HEK293 (cell line): ENCODE measurements at regions of chr7 and their contacts with region 1.

Region 1: DNA sequence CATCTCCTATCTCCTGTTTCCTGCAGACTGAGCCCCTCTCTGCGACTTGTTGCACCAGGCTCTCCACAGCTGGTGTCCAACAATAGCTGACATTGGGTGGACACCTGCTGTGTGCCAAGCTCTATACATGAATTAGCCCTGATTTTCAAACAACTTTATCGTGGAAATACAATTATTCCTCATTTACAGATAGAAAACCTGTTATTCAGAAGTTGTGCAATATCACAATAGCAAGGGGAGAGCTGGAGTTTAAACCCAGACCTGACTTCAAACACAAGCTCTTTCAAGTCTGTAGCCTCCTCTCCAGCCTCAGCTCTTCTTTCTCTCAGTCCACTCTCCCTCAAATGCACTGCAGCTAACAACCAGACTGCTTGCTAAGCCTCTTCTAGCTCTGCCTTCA is 168.8 kb downstream of the HECW1 start:
- H3K4me3 ChIP-seq: no peak overlapping the region
- H3K27ac ChIP-seq: no peak overlapping the region
- H3K4me1 ChIP-seq: no peaks in the 10 kb centered on the region
- CTCF ChIP-seq: no peak

Region 2: GRCh38 chr7:43294080-43294630 is 12.9 kb after region 1 on chr7:
- CTCF ChIA-PET with region 1: no interaction called
- POLR2A ChIA-PET with region 1: interaction called, 10 read pairs
- H3K4me3 ChIP-seq: no peak overlapping the region
- H3K27ac ChIP-seq: no peak overlapping the region
- H3K4me1 ChIP-seq: no peaks in the 10 kb centered on the region
- CTCF ChIP-seq: no peak